Common myeloid progenitor, CD34-positive (primary cell): ENCODE measurements at regions of chr14 and their contacts with region 1.

Region 1: GRCh38 chr14:50559990-50560930 is at the start of gene ATL1:
- DNase-seq: peak; percentile 81 to 94 (median 91)
- H3K4me3 ChIP-seq: peak within 1 kb of the TSS; percentile 61 to 90 (median 82)
- H3K27ac ChIP-seq: peak within 1 kb of the TSS; percentile 46 to 74
- H3K4me1 ChIP-seq: peaks cover 3 to 15% (median 12%) of the 10 kb centered on the region in 4 experiments
- H3K27me3 ChIP-seq: no peaks in the 10 kb centered on the region

Region 2: DNA sequence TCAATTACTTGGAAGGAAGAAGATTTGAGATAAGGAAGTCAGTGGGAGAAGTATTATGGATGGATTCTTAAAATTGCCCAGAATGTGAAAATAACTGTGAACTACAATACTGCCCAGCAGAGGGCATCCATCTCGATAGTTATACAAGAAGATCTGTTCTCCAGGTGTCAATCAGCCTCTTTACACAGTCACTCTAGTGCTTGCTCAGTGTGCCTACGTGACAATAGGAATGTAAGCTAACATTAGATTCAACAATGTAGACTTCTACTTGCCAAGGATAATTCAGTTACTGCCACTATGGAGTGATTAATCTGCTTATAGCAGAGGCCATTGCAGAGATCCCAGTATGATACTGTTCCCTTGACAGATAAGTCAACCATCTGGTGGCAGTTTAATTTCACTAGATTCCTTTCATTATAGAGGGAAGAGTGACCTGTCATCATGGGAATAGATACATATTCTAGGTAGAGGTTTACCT is 17.3 kb before region 1 on chr14:
- CTCF ChIA-PET with region 1: interaction called, 15 read pairs
- POLR2A ChIA-PET with region 1: interaction called, 3 read pairs
- DNase-seq: peak; percentile 62 to 80 (median 77)
- H3K4me3 ChIP-seq: no peak overlapping the region
- H3K27ac ChIP-seq: no peak overlapping the region
- H3K4me1 ChIP-seq: no peaks in the 10 kb centered on the region
- H3K27me3 ChIP-seq: no peaks in the 10 kb centered on the region